GM13976 (cell line): ENCODE measurements at regions of chr7 and their contacts with region 1.

Region 1: DNA sequence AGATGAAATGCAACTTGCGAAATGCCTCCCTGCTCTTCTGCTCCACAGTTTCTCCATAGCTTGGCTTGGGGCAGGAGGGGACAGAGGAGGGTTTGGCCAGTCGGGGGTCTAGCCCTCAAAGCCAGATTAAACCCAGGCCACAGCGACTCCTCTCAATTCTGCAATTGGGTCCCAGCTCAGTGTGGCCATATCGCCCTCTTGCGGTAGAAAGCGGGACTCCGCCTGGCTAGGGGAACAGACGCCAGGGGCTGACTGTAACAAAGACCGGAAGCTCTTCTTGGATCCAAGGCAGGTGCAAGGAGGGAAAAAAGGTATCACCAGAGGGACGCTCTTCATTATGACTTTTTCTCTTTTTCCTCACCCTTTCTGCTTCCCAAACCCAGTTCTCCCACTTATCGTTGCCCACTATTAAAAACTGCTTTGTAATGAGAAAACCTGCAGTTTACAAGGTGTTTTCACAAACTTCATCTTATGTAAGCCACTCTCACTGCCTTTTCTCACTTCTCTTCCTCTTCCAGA is 36.6 kb upstream of the TNPO3 start:
- DNase-seq: peak; percentile 81
- CTCF ChIP-seq: peak; percentile 99

Region 2: GRCh38 chr7:128904381-128905197 is 187.0 kb before region 1 on chr7:
- in situ Hi-C with region 1: loop called (anchors 25 kb)
- DNase-seq: peak; percentile 91
- CTCF ChIP-seq: peak; percentile 37

Region 3: DNA sequence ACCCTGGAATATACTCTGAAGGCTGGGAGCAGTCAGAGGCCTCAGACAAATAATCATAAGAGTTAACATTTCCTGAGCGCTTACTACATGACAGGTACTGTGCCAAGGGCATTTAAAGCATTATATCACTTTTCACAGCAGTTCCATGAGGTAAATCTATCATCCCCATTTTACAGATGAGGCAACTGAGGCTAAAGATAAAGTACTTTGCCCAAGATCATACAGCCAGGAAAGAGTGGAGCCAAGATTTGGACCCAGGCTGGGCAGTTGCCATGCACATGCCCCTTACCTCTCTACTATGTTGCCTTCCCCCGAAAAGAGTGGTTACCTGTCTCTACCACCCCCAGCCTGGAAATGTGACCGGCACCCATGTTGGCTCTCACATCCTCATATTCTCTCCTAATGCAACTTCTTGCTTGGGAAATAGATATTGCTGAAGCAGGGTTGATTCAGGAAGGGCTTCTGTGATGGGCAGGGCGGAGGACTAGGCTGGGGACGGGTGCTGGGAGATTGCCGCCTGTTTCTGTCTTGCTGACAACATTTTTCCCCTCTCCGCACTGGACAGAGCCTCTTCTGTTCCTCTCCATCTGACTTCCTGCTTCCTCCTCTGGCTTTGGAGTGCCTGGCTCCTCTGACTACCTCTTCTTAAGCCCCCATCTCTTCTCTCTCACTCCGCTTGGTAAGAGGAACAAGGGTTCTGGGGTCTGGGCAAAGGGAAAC is 110.7 kb after region 1 on chr7:
- in situ Hi-C with region 1: loop called (anchors 10 kb)
- DNase-seq: no peak
- CTCF ChIP-seq: no peak